Mammary epithelial cell (primary cell): ENCODE measurements at regions of chr4 and their contacts with region 1.

Region 1: GRCh38 chr4:106329041-106329618 is 12.8 kb downstream of the AIMP1 start:
- DNase-seq: peak; percentile 40
- H3K4me3 ChIP-seq: no peak overlapping the region
- H3K27ac ChIP-seq: no peak overlapping the region
- H3K4me1 ChIP-seq: no peaks in the 10 kb centered on the region
- H3K27me3 ChIP-seq: no peaks in the 10 kb centered on the region
- CTCF ChIP-seq: peak; percentile 68 to 89

Region 2: DNA sequence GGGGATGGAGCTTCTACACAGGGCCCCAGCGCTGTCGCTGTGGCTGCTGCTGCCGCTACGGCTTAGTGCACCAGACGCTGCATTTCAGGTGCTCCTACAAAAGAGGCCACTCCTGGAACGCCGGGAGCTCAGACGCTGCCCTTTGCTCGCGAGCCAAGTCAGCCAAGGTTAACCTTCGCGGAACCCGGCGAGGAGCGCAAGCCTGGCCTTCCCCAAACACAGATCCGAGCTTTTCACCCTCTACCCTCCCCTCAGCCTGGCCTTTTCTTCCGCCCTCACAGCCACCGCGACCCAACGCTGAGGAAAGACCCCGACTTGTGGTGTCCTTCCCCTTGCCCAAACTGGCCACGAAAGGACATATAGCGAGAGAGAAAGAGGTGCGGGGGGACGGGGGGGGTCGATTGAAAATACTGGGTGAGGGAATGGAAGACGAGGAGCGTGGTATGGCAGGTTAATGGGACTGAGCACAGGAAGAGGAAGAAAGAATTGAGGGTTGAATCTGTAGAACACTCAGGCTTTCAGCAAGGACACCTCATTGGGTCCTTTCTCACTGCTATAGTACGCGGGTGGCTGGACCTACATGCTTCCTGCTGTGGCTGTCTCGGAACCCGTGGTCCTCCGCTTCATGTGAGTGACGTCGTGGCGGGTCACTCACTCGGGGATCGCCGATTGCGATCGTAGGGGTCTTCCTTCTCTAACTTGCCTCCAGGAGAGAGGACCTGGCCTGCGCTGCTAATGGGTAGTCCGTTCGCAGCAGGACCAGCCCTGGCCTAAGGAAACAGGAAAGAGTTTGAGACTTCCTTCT is 13.0 kb before region 1 on chr4 and contains the starts of genes AIMP1 and TBCK:
- CTCF ChIA-PET with region 1: no interaction called
- dilution Hi-C with region 1: no loop called
- in situ Hi-C with region 1: no loop called
- intact Hi-C with region 1: loop called (anchors 1 kb)
- DNase-seq: peak; percentile 85
- H3K4me3 ChIP-seq: peak within 1 kb of the TSS; percentile 80 to 91 (median 88)
- H3K27ac ChIP-seq: peak within 1 kb of the TSS; percentile 98
- H3K4me1 ChIP-seq: peaks cover 15% of the 10 kb centered on the region
- H3K27me3 ChIP-seq: no peaks in the 10 kb centered on the region
- CTCF ChIP-seq: no peak
- total RNA-seq, gene AIMP1: 17.7 to 56.0 TPM
- total RNA-seq, gene TBCK: 28.0 to 45.3 TPM

Region 3: DNA sequence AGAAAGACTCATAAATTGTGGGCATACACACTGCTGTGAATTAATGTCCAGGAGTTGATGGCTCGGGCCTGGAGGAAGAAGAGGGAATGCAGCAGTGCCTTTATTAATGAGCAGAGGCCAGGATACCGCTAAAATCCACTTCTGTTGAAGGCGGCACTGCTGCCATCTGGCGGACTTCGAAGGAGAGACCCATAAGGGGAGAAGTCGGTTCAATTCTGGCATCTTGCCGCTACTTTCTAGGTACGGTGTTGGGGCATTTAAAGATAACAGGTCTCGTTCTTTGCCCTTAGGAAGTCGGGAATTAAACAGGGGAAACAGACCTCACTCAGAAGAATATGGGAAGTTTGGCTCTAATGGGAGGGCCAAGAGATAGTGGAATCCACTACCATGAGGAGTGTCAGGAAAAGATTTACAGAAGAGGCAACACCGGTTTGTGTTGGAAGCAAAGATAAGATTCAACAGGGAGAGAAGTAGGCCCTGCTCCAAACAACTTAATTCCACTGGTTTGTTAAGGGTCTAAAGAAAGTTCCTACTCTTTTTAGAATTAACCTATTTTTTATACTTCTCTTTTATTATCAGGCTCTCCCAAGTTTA is 173.1 kb after region 1 on chr4:
- CTCF ChIA-PET with region 1: no interaction called
- dilution Hi-C with region 1: no loop called
- in situ Hi-C with region 1: no loop called
- intact Hi-C with region 1: loop called (anchors 1 kb)
- DNase-seq: peak; percentile 52
- H3K4me3 ChIP-seq: no peak overlapping the region
- H3K27ac ChIP-seq: no peak overlapping the region
- H3K4me1 ChIP-seq: no peaks in the 10 kb centered on the region
- H3K27me3 ChIP-seq: no peaks in the 10 kb centered on the region
- CTCF ChIP-seq: peak; percentile 65 to 87

Region 4: GRCh38 chr4:106647451-106647850 is 318.3 kb after region 1 on chr4:
- CTCF ChIA-PET with region 1: no interaction called
- dilution Hi-C with region 1: no loop called
- in situ Hi-C with region 1: no loop called
- intact Hi-C with region 1: no loop called
- DNase-seq: no peak
- H3K4me3 ChIP-seq: no peak overlapping the region
- H3K27ac ChIP-seq: no peak overlapping the region
- H3K4me1 ChIP-seq: no peaks in the 10 kb centered on the region
- H3K27me3 ChIP-seq: no peaks in the 10 kb centered on the region
- CTCF ChIP-seq: no peak

Region 5: GRCh38 chr4:106809076-106809475 is 479.9 kb after region 1 on chr4:
- CTCF ChIA-PET with region 1: no interaction called
- dilution Hi-C with region 1: no loop called
- in situ Hi-C with region 1: no loop called
- intact Hi-C with region 1: loop called (anchors 1 kb)
- DNase-seq: peak; percentile 48
- H3K4me3 ChIP-seq: no peak overlapping the region
- H3K27ac ChIP-seq: no peak overlapping the region
- H3K4me1 ChIP-seq: no peaks in the 10 kb centered on the region
- H3K27me3 ChIP-seq: no peaks in the 10 kb centered on the region
- CTCF ChIP-seq: peak; percentile 50 to 71